PC-9 (cell line): ENCODE measurements at regions of chr3 and their contacts with region 1.

Region 1: GRCh38 chr3:184523825-184524615 is 37.6 kb upstream of the EPHB3 start:
- DNase-seq: peak in 1 of 2 experiments; percentile 54
- H3K4me3 ChIP-seq: no peak overlapping the region
- H3K27ac ChIP-seq: no peak overlapping the region
- H3K4me1 ChIP-seq: no peaks in the 10 kb centered on the region
- H3K27me3 ChIP-seq: peaks cover 78% of the 10 kb centered on the region
- CTCF ChIP-seq: no peak

Region 2: GRCh38 chr3:184417619-184418327 is 106.2 kb before region 1 on chr3:
- CTCF ChIA-PET with region 1: no interaction called
- POLR2A ChIA-PET with region 1: no interaction called
- intact Hi-C with region 1: no loop called
- DNase-seq: peak; percentile 57 to 75
- H3K4me3 ChIP-seq: no peak overlapping the region
- H3K27ac ChIP-seq: no peak overlapping the region
- H3K4me1 ChIP-seq: no peaks in the 10 kb centered on the region
- H3K27me3 ChIP-seq: peaks cover 11% of the 10 kb centered on the region; the same call in 1 of the 2 replicates
- CTCF ChIP-seq: peak; percentile 98

Region 3: GRCh38 chr3:184428561-184429175 is 95.4 kb before region 1 on chr3:
- CTCF ChIA-PET with region 1: interaction called, 12 read pairs
- POLR2A ChIA-PET with region 1: no interaction called
- intact Hi-C with region 1: no loop called
- DNase-seq: no peak
- H3K4me3 ChIP-seq: no peak overlapping the region
- H3K27ac ChIP-seq: no peak overlapping the region
- H3K4me1 ChIP-seq: no peaks in the 10 kb centered on the region
- H3K27me3 ChIP-seq: no peaks in the 10 kb centered on the region
- CTCF ChIP-seq: no peak

Region 4: DNA sequence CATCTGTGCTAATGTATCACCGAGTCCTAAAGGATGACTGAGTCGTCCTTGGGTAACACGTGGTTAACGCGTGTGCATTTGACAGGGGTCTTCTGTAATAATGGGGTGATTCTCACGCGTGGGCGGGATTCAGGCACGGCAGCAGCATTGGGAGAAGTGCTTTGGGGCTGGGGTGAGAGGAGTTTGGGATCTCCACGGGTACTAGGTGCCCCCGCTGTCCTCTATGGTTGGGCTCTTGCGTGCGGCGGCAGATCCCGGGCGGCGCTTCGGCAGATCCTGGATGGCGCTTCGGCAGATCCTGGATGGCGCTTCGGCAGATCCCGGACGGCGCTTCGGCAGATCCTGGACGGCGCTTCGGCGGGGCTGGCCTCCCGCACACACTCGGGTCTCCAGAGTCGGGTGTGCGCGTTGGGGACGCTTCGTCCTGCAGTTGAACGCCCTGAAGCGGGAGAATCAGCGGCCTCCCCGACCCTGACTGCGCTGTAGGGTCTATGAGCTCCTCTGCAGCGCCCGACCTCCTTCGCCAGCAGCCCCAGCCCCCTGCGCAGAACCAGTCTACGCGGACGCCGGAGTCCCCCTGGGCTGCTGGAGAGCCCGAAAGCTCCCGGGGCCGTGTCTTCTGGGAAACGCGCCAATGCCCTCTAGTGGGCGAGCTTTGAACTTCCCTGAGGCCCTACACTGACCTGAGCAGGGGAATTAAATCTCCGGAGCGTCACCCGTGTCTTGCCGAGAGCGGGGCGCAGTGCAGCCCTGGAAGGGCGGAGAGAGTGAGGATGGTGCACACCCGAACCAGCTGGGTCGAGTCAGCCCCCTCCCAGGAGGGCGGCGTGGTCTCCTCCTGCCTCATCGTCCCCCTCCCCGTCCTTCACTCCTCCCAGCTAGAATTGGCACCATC is 10.5 kb before region 1 on chr3:
- CTCF ChIA-PET with region 1: no interaction called
- POLR2A ChIA-PET with region 1: no interaction called
- intact Hi-C with region 1: loop called (anchors 1 kb)
- DNase-seq: peak; percentile 56 to 85
- H3K4me3 ChIP-seq: no peak overlapping the region
- H3K27ac ChIP-seq: no peak overlapping the region
- H3K4me1 ChIP-seq: no peaks in the 10 kb centered on the region
- H3K27me3 ChIP-seq: peaks cover 93% of the 10 kb centered on the region
- CTCF ChIP-seq: peak; percentile 94

Region 5: GRCh38 chr3:184691397-184692231 is 167.6 kb after region 1 on chr3:
- CTCF ChIA-PET with region 1: no interaction called
- POLR2A ChIA-PET with region 1: no interaction called
- intact Hi-C with region 1: no loop called
- DNase-seq: no peak
- H3K4me3 ChIP-seq: no peak overlapping the region
- H3K27ac ChIP-seq: no peak overlapping the region
- H3K4me1 ChIP-seq: peaks cover 10% of the 10 kb centered on the region; the same call in 1 of the 2 replicates
- H3K27me3 ChIP-seq: no peaks in the 10 kb centered on the region
- CTCF ChIP-seq: no peak